RWPE1 (cell line): ENCODE measurements at regions of chr13 and their contacts with region 1.

Region 1: DNA sequence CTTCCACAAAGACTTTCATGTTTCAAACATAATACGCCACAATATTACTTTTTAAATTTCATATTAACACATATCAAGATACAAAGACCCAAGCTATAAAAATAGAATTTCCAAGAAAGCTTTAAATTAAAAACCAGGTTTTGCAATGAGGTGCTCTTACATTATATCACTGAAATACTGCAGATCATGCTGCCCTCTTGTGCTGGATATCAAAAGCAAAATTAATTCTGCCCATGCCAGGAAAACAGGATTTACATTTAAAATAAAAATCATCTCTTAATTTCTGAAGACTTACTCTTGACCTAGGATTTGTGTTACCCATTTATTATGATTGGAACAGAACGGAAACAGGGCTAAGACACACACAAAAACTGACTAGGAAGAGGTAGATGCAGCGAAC is 145.0 kb downstream of the ABCC4 start:
- DNase-seq: peak; percentile 6
- H3K27ac ChIP-seq: no peak overlapping the region
- CTCF ChIP-seq: peak; percentile 24; the same call in 1 of the 2 replicates

Region 2: GRCh38 chr13:95176611-95177259 is 20.5 kb after region 1 on chr13:
- CTCF ChIA-PET with region 1: interaction called, 10 read pairs
- POLR2A ChIA-PET with region 1: no interaction called
- DNase-seq: no peak
- H3K27ac ChIP-seq: no peak overlapping the region
- CTCF ChIP-seq: no peak